ENCODE measurements at regions of chr7 and their contacts with region 1.

Region 1: DNA sequence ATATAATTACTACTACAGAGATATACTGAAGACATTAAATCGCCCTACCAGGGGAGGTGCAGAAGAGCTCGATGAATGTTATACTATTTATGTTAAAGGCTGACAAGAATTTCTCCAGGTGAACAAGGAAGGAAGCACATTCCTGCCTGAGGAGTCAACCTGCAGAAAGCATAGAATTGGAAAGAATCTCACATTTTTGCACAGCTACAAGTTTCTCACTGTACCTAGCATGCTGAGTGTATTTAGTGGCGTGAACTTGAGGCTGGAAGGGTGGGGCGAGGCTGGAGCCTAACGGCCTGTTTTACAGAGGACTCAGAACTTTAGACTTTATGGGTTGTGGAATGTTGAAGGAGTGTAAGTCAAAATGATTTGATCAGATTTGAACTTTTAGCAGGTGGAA is 373.6 kb upstream of the LRGUK start:
- DNase-seq: no peak
- ATAC-seq: no peak
- H3K4me3 ChIP-seq: no peak overlapping the region
- H3K27ac ChIP-seq: no peak overlapping the region
- H3K4me1 ChIP-seq: 0 out of 3 replicates have a peak, but pooled peaks cover 3% of the 10 kb centered on the region
- CTCF ChIP-seq: no peak
- EP300 ChIP-seq: no peak
- POLR2A ChIP-seq: no peak
- RAD21 ChIP-seq: no peak

Region 2: DNA sequence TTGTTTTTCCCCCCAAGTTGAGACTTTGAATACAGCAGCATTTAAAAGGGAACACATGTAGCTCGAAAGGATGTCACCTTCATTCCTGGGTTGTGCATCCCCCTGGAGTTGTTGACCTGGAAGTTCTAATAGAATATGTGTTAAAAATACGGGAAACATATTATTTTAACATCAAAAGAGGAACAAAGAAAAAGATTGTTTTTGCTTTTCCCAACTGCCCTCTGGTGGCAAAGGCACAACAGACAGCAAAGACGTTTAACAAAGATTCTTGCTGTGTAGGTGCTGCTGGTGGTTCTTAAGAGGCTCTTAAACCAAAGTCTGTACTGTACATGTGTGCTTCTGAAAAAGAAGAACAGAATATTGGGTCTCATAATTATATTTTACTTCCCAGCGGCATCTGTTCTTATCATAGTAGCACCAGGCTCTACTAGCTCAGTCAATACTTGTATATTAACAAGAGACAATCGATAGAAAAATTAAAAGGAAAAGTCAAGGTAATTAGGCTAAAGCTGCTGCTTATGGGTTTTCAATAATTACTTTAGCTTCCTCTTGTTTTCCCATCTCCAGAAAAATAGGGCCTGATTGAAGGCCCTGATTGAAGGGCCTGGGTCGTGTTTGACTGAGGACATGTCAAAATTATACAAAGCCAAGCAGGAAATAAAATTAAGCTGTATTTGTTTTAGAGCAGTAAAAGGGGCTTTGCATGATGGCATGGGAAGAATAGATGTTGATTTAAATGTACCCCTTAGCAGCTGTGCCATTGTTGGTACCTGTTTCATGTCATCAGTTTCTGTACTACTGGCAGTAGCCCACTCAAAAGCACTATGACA is 10.6 kb before region 1 on chr7:
- CTCF ChIA-PET with region 1: interaction called, 17 read pairs
- POLR2A ChIA-PET with region 1: no interaction called
- DNase-seq: peak in 1 of 2 experiments; percentile 31
- ATAC-seq: peak; percentile 39 to 43; a peak in 2 of 6 replicates
- H3K4me3 ChIP-seq: no peak overlapping the region
- H3K27ac ChIP-seq: no peak overlapping the region
- H3K4me1 ChIP-seq: no peaks in the 10 kb centered on the region
- CTCF ChIP-seq: peak; percentile 65
- EP300 ChIP-seq: no peak
- POLR2A ChIP-seq: no peak
- RAD21 ChIP-seq: peak; percentile 61 to 66

Region 3: GRCh38 chr7:133983685-133984419 is 230.3 kb after region 1 on chr7:
- CTCF ChIA-PET with region 1: no interaction called
- POLR2A ChIA-PET with region 1: no interaction called
- DNase-seq: no peak
- ATAC-seq: no peak; a peak in 1 of 6 replicates
- H3K4me3 ChIP-seq: no peak overlapping the region
- H3K27ac ChIP-seq: no peak overlapping the region
- H3K4me1 ChIP-seq: no peaks in the 10 kb centered on the region
- CTCF ChIP-seq: no peak
- EP300 ChIP-seq: no peak
- POLR2A ChIP-seq: no peak
- RAD21 ChIP-seq: no peak

Measured in A549 (cell line).